Mammary epithelial cell (primary cell): ENCODE measurements at regions of chr6 and their contacts with region 1.

Region 1: DNA sequence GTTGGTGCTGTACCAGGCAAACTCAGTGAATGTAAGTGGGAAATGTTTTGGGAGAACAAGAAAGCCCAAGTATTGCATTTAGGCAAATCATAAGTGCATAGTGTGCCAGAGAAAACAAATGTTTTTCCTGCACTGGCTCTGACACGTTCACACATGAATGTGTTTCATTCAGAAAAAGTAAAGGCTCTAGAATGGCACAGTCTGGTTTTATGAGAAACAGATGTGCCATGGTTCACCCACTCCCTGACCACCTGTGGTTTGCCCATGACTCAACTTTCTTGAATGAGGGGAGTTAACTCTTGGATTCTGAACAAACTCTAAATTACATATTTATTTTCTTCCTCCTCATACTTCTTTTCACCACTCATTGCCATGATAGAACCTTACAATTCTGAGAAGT is 126.9 kb downstream of the KCNQ5 start:
- DNase-seq: peak; percentile 98
- H3K4me3 ChIP-seq: no peak overlapping the region
- H3K27ac ChIP-seq: no peak overlapping the region
- H3K4me1 ChIP-seq: peaks cover 28% of the 10 kb centered on the region
- H3K27me3 ChIP-seq: no peaks in the 10 kb centered on the region
- CTCF ChIP-seq: no peak

Region 2: DNA sequence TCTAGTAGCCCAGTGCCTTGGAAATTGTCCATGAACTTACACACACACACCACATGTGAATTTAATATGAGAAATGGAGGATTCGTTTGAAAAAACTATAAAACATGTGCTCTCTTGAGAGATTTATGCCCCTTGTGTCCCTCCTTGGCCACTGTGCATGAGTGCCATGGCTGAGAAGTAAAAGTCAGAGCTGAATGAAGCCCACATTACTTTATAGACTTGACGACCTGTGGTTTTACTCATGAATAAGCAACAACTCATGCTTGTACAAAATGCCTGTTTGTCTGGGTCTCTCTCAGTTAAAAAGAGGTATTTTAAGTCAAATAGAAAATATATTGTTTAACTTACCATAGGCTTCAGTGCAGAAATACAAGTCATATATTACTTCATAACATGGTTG is 24.2 kb before region 1 on chr6:
- CTCF ChIA-PET with region 1: no interaction called
- dilution Hi-C with region 1: no loop called
- in situ Hi-C with region 1: no loop called
- intact Hi-C with region 1: no loop called
- DNase-seq: no peak
- H3K4me3 ChIP-seq: no peak overlapping the region
- H3K27ac ChIP-seq: no peak overlapping the region
- H3K4me1 ChIP-seq: no peaks in the 10 kb centered on the region
- H3K27me3 ChIP-seq: no peaks in the 10 kb centered on the region
- CTCF ChIP-seq: no peak

Region 3: DNA sequence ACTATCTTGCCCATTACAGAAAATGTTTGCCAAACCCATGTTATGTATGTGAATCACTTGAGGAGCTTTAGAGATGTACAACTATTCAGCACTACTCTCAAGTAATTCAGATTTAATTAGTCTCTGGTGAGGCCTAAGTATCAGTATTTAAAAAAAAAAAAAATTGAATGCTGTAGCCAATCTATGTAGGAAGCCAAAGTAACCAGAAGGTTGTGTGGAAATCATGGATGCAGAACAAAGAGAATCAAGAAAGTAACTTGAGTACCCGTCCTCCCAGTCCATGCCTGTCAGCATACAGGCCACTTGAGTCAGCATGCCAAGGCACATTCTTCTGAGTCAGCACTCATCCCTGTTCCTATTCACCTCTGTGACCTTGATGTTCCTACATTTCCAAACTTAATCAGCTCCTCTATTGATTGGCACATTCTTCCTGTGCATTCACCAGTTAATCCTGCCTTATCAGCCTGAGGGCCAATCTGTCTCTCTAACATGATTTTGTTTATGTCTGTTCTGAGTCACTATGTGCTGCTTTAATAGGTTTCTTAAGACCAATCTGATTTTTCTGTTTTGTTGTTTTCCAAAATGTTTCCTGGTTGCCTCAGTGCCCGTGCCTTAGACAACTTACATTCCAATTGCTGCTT is 38.8 kb after region 1 on chr6:
- CTCF ChIA-PET with region 1: no interaction called
- dilution Hi-C with region 1: no loop called
- in situ Hi-C with region 1: no loop called
- intact Hi-C with region 1: loop called (anchors 5 kb)
- DNase-seq: peak; percentile 94
- H3K4me3 ChIP-seq: peak overlapping the region in 1 of 3 experiments; percentile 17
- H3K27ac ChIP-seq: peak overlapping the region; percentile 99
- H3K4me1 ChIP-seq: peaks cover 47% of the 10 kb centered on the region
- H3K27me3 ChIP-seq: no peaks in the 10 kb centered on the region
- CTCF ChIP-seq: no peak

Region 4: GRCh38 chr6:72968704-72969103 is 219.9 kb after region 1 on chr6:
- CTCF ChIA-PET with region 1: no interaction called
- dilution Hi-C with region 1: no loop called
- in situ Hi-C with region 1: no loop called
- intact Hi-C with region 1: loop called (anchors 5 kb)
- DNase-seq: peak; percentile 93
- H3K4me3 ChIP-seq: no peak overlapping the region
- H3K27ac ChIP-seq: peak overlapping the region; percentile 95
- H3K4me1 ChIP-seq: peaks cover 20% of the 10 kb centered on the region
- H3K27me3 ChIP-seq: no peaks in the 10 kb centered on the region
- CTCF ChIP-seq: no peak